ENCODE measurements at regions of chr11 and their contacts with region 1.

Region 1: GRCh38 chr11:57249384-57250319 is 12.6 kb upstream of the APLNR start:
- DNase-seq: no peak
- H3K4me3 ChIP-seq: no peak overlapping the region
- CTCF ChIP-seq: peak; percentile 82

Region 2: DNA sequence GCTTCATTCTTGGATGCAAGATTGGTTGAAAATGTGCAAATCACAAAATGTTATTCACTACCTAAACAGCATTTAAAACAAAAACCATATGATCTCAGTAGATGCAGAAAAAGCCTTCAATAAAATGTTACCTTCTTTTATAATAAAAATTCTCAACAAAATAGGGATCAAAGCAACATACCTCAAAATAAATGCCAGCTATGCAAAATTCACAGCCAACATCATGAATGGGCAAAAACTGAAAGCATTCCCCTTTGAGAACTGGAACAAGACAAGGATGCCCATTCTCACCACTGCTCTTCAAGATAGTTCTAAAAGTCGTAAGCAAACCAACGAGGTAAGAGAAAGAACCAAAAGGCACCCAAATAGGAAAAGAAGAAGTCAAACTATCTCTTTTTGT is 258.9 kb before region 1 on chr11:
- CTCF ChIA-PET with region 1: interaction called, 29 read pairs
- POLR2A ChIA-PET with region 1: no interaction called
- DNase-seq: no peak
- H3K4me3 ChIP-seq: no peak overlapping the region
- CTCF ChIP-seq: no peak

Region 3: DNA sequence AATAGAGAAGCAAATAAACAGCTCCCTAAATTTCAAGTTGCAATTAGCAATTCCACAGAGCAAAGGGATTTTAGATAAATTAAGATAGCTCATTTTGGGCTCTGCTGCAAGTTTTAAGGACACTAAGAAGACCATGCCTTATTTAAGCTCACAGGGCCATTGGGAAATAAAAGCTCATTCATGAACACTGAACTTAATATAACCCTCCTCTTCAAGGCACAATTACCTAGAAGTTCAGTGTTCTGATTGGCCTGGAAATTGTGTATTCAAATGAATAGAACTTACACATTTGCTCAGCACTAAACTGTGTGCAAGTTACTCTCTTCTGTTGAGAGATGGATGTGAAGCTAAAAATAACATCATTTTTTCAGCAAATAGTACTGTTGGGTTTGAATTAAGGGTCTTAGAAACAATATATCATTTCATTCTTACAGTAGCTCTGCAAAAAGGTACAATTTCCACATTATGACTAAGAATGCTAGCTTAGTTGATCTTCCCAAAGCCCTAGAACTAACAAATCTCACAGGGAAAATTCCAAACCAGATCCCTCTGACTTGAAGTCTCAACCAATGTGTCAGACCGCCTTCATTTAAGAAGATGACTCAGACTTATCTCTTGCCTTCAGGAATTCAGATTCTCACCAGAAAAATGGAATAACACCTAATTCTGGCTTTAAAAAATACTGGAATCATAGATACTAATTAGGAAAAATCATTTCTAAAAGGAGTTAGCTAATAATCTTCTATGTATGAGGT is 155.3 kb before region 1 on chr11:
- CTCF ChIA-PET with region 1: interaction called, 13 read pairs
- POLR2A ChIA-PET with region 1: no interaction called
- DNase-seq: peak; percentile 59
- H3K4me3 ChIP-seq: no peak overlapping the region
- CTCF ChIP-seq: no peak

Region 4: DNA sequence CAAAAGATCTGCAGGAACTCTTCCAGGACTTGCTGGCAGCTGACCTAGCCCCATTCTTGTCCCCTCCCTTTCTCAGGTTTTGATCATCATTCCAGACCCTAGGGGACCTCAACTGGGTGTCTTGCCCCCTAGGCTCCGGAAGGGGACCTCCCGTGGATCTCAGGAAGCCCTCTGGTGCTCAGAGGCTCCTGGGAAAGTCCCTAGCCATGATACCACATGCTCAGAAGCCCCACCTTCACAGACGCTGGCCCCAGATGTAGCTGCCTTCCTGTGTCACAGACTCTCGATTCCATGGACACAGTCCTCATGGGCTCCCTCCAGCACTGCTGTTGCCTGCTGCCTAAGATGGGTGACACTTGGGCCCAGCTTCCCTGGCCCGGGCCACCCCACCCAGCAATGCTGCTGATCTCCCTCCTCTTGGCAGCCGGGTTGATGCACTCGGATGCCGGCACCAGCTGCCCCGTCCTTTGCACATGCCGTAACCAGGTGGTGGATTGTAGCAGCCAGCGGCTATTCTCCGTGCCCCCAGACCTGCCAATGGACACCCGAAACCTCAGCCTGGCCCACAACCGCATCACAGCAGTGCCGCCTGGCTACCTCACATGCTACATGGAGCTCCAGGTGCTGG is 67.9 kb before region 1 on chr11 and contains the start of gene LRRC55:
- CTCF ChIA-PET with region 1: interaction called, 13 read pairs
- POLR2A ChIA-PET with region 1: no interaction called
- DNase-seq: no peak
- H3K4me3 ChIP-seq: no peak within 1 kb of the TSS
- CTCF ChIP-seq: no peak

Region 5: GRCh38 chr11:57224537-57224936 is 25.1 kb before region 1 on chr11:
- CTCF ChIA-PET with region 1: interaction called, 49 read pairs
- POLR2A ChIA-PET with region 1: interaction called, 3 read pairs
- DNase-seq: peak; percentile 46
- H3K4me3 ChIP-seq: no peak overlapping the region
- CTCF ChIP-seq: no peak

Region 6: GRCh38 chr11:57277845-57278709 is 28.4 kb after region 1 on chr11:
- CTCF ChIA-PET with region 1: interaction called, 121 read pairs
- POLR2A ChIA-PET with region 1: no interaction called
- DNase-seq: no peak
- H3K4me3 ChIP-seq: peak overlapping the region; percentile 25; the same call in 1 of the 2 replicates
- CTCF ChIP-seq: peak; percentile 83

Region 7: DNA sequence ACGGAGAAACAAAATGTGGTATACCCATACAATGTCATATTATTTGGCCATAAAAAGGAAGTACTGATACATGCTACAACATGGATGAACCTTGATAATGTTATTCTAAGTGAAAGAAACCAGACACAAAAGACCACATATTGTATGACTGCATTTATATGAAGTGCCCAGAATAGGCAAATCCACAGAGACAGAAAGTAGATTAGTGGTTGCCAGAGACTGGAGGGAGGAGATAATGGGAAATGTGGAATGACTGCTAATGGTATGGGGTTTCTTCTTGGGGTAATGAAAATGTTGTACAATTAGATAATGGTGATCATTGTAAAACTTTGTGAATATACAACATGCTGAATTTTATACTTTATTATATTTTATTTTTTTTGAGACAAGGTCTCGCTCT is 271.5 kb after region 1 on chr11:
- CTCF ChIA-PET with region 1: no interaction called
- POLR2A ChIA-PET with region 1: no interaction called
- DNase-seq: no peak
- H3K4me3 ChIP-seq: no peak overlapping the region
- CTCF ChIP-seq: no peak